GM12878 (cell line): ENCODE measurements at regions of chr1 and their contacts with region 1.

Region 1: GRCh38 chr1:28088168-28088961 is at the start of gene EYA3:
- DNase-seq: peak; percentile 98
- ATAC-seq: peak; percentile 94
- H3K4me3 ChIP-seq: peak within 1 kb of the TSS; percentile 94
- H3K27ac ChIP-seq: peak within 1 kb of the TSS; percentile 93
- H3K4me1 ChIP-seq: peaks cover 17% of the 10 kb centered on the region
- H3K27me3 ChIP-seq: no peaks in the 10 kb centered on the region
- CTCF ChIP-seq: no peak
- EP300 ChIP-seq: no peak
- POLR2A ChIP-seq: peak; percentile 86; the same call in 1 of the 2 replicates
- RAD21 ChIP-seq: no peak
- polyA plus RNA-seq, gene EYA3: 13.0 to 15.6 TPM

Region 2: DNA sequence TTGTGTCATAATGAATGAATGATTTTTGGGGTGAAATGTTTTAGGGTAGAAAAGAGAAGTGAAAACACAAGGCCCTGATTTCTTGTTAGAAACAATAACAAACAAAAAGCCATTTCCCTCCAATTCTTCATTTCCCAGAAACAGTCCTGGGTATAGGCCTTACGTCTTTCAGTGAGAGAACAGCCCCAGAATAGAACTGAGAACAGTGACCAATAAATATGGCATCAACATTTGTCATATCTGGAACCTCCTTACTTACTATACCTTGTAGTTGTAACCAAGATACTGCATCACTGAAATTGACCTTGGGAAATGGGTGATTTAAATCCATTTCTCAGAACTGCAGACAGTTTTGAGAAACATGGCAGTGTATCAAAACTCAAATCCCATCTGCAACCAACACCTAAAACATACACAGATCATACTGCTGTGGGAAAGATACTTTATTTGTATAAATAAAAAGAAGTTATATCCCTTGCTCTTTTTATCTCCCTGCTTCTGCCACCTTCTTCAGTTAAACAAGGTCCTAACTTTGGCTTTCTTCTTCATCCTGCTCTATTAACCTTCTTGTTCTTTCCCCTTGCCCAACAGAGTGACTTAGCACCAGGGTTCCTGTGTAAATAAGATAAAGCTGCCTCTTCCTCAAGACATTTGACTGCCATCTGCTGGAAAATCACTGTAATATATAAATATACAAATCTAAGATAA is 109.1 kb before region 1 on chr1:
- CTCF ChIA-PET with region 1: interaction called, 4 read pairs
- POLR2A ChIA-PET with region 1: no interaction called
- RAD21 ChIA-PET with region 1: interaction called, 10 read pairs
- SMC1A ChIA-PET with region 1: no interaction called
- in situ Hi-C with region 1: no loop called
- intact Hi-C with region 1: no loop called
- DNase-seq: peak; percentile 19
- ATAC-seq: peak; percentile 87
- H3K4me3 ChIP-seq: no peak overlapping the region
- H3K27ac ChIP-seq: peak overlapping the region; percentile 25; the same call in 1 of the 2 replicates
- H3K4me1 ChIP-seq: peaks cover 11% of the 10 kb centered on the region
- H3K27me3 ChIP-seq: no peaks in the 10 kb centered on the region
- CTCF ChIP-seq: peak; percentile 25 to 52 (median 51); a peak in 3 of 6 replicates
- EP300 ChIP-seq: no peak
- POLR2A ChIP-seq: no peak
- RAD21 ChIP-seq: peak; percentile 77

Region 3: DNA sequence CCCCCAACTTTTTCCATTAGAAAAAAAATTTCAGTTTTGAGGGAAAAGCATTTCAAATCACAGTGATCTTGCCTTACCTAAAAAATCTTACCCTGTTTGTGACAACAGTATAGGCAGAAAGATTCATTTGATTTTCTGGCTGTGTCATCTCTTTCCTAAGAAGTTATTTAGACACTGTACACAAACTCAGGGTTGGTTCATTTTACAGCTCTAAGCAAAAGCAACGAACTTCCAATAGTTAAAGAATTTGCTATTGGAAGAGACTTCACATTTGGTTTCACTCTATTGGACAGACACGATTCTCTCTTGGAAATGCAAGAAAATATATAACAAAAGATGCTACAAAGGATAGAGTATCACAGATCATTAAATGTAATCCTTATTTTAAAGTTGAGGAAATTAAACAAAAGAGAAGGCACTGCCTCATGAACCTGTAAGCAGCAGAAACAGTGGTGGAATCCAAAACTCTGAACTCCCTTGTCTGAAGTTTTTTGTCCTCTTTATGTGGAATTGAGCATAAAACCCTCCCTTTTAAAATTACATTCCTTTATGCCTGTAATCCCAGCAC is 20.8 kb before region 1 on chr1:
- CTCF ChIA-PET with region 1: interaction called, 8 read pairs
- POLR2A ChIA-PET with region 1: interaction called, 6 read pairs
- RAD21 ChIA-PET with region 1: interaction called, 17 read pairs
- SMC1A ChIA-PET with region 1: interaction called, 44 read pairs
- in situ Hi-C with region 1: no loop called
- intact Hi-C with region 1: no loop called
- DNase-seq: no peak
- ATAC-seq: no peak
- H3K4me3 ChIP-seq: no peak overlapping the region
- H3K27ac ChIP-seq: no peak overlapping the region
- H3K4me1 ChIP-seq: peaks cover 24% of the 10 kb centered on the region
- H3K27me3 ChIP-seq: no peaks in the 10 kb centered on the region
- CTCF ChIP-seq: no peak
- EP300 ChIP-seq: no peak
- POLR2A ChIP-seq: no peak
- RAD21 ChIP-seq: no peak

Region 4: DNA sequence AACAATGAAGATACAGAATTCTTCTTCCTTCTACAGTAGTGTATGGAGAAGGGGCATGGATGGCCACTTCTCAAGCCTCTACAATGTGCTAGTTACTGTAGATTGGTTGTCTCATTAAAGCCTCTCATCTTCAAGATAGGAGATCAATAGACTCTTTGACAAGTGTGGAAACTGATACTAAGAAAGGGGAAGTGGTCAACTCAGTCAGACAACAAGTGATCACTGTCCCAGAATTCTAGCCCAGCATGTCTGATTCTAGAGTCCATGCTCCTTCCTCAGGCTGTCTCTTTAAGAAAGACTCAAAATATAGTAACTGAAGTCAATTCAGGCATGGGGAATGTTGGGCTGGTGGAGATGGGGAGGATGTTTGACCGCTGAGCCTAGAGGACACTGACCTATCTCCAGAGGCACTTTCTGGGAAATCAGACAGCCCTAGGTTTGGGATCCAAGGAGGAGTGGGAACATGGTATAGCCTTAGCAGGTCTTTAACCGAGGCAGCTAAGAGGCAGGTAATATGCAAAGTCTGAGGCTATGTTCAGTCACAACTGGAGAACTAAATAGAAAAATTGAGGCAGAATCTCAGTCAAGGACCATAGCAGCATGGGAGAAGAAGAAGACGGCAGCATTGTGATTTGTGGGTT is 39.4 kb after region 1 on chr1:
- CTCF ChIA-PET with region 1: interaction called, 5 read pairs
- POLR2A ChIA-PET with region 1: interaction called, 3 read pairs
- RAD21 ChIA-PET with region 1: interaction called, 12 read pairs
- SMC1A ChIA-PET with region 1: interaction called, 18 read pairs
- in situ Hi-C with region 1: no loop called
- intact Hi-C with region 1: loop called (anchors 1 kb)
- DNase-seq: peak; percentile 84
- ATAC-seq: peak; percentile 83
- H3K4me3 ChIP-seq: no peak overlapping the region
- H3K27ac ChIP-seq: no peak overlapping the region
- H3K4me1 ChIP-seq: peaks cover 43% of the 10 kb centered on the region
- H3K27me3 ChIP-seq: no peaks in the 10 kb centered on the region
- CTCF ChIP-seq: no peak
- EP300 ChIP-seq: peak in 1 of 2 experiments; percentile 57; a peak in 1 of 4 replicates
- POLR2A ChIP-seq: no peak
- RAD21 ChIP-seq: no peak

Region 5: GRCh38 chr1:28160782-28161266 is 72.5 kb after region 1 on chr1:
- CTCF ChIA-PET with region 1: interaction called, 14 read pairs
- POLR2A ChIA-PET with region 1: interaction called, 6 read pairs
- RAD21 ChIA-PET with region 1: interaction called, 4 read pairs
- SMC1A ChIA-PET with region 1: interaction called, 14 read pairs
- in situ Hi-C with region 1: no loop called
- intact Hi-C with region 1: no loop called
- DNase-seq: no peak
- ATAC-seq: no peak; the same call in 2 of the 3 replicates
- H3K4me3 ChIP-seq: no peak overlapping the region
- H3K27ac ChIP-seq: no peak overlapping the region
- H3K4me1 ChIP-seq: no peaks in the 10 kb centered on the region; the same call in 1 of the 2 replicates
- H3K27me3 ChIP-seq: no peaks in the 10 kb centered on the region
- CTCF ChIP-seq: no peak
- EP300 ChIP-seq: no peak
- POLR2A ChIP-seq: no peak
- RAD21 ChIP-seq: no peak

Region 6: GRCh38 chr1:28199328-28200233 is 111.2 kb after region 1 on chr1:
- CTCF ChIA-PET with region 1: interaction called, 317 read pairs
- POLR2A ChIA-PET with region 1: interaction called, 9 read pairs
- RAD21 ChIA-PET with region 1: interaction called, 47 read pairs
- SMC1A ChIA-PET with region 1: interaction called, 445 read pairs
- in situ Hi-C with region 1: no loop called
- intact Hi-C with region 1: loop called (anchors 1 kb)
- DNase-seq: peak; percentile 99
- ATAC-seq: peak; percentile 91
- H3K4me3 ChIP-seq: peak overlapping the region; percentile 57; the same call in 1 of the 2 replicates
- H3K27ac ChIP-seq: peak overlapping the region; percentile 83
- H3K4me1 ChIP-seq: peaks cover 44% of the 10 kb centered on the region
- H3K27me3 ChIP-seq: no peaks in the 10 kb centered on the region
- CTCF ChIP-seq: no peak
- EP300 ChIP-seq: peak; percentile 85 to 98
- POLR2A ChIP-seq: peak; percentile 58; the same call in 1 of the 2 replicates
- RAD21 ChIP-seq: peak; percentile 29; the same call in 1 of the 2 replicates